Gastrocnemius medialis (tissue), 4 donors: ENCODE measurements at regions of chr3 and their contacts with region 1.

Region 1: GRCh38 chr3:178084938-178085816 is 451.1 kb upstream of the KCNMB2 start:
- DNase-seq: peak; percentile 62 to 75
- ATAC-seq: peak; percentile 86 to 90
- H3K4me3 ChIP-seq: no peak overlapping the region
- H3K27ac ChIP-seq: peak overlapping the region in 3 of 4 donors; percentile 47 to 61 (median 51)
- H3K4me1 ChIP-seq: peaks cover 24 to 41% of the 10 kb centered on the region in 2 donors
- H3K27me3 ChIP-seq: no peaks in the 10 kb centered on the region
- CTCF ChIP-seq: no peak
- POLR2A ChIP-seq: no peak

Region 2: DNA sequence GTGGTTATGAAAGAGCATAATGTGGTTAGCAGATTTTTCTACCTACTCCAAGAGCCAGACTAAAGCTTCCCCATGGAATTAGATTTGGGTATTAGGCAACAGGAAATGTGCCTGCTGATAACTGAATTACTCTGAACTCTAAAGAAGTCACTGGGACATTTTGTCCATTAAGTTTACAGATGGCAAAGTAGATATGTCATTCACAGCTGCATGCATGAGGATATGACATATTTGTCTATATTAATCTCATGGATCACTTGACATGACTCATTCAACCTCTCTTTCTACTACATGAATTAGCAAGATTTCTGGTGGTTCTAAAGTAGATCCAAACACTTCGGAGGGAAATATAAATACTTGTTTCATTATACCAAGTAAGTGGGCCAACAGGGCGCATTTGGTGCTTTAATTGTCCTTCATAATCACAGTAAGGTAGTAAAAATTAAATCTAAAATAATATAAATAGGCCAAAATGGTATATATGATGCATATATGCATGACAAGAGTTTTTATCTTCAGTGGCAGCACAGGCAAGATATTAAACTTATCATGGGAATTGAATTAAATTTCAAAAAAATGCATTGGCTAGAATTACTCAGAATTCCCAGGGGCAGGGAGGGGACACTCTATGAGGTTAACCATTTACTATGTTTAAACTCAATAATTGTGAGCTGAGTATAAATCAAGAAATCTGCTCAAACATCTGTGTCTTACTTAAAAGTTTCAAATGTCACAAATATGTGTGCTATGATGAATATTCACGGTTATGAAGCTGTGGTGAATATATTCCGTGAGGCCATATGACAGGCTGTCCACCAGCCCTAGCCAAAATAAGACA is 85.7 kb after region 1 on chr3:
- in situ Hi-C with region 1: no loop called
- intact Hi-C with region 1: loop called (anchors 5 kb)
- DNase-seq: peak in 1 of 2 donors; percentile 23
- ATAC-seq: peak; percentile 100
- H3K4me3 ChIP-seq: no peak overlapping the region
- H3K27ac ChIP-seq: peak overlapping the region; percentile 51 to 73 (median 56)
- H3K4me1 ChIP-seq: peaks cover 15 to 16% of the 10 kb centered on the region in 2 donors
- H3K27me3 ChIP-seq: no peaks in the 10 kb centered on the region
- CTCF ChIP-seq: no peak
- POLR2A ChIP-seq: no peak